A673 (cell line): ENCODE measurements at regions of chr7 and their contacts with region 1.

Region 1: DNA sequence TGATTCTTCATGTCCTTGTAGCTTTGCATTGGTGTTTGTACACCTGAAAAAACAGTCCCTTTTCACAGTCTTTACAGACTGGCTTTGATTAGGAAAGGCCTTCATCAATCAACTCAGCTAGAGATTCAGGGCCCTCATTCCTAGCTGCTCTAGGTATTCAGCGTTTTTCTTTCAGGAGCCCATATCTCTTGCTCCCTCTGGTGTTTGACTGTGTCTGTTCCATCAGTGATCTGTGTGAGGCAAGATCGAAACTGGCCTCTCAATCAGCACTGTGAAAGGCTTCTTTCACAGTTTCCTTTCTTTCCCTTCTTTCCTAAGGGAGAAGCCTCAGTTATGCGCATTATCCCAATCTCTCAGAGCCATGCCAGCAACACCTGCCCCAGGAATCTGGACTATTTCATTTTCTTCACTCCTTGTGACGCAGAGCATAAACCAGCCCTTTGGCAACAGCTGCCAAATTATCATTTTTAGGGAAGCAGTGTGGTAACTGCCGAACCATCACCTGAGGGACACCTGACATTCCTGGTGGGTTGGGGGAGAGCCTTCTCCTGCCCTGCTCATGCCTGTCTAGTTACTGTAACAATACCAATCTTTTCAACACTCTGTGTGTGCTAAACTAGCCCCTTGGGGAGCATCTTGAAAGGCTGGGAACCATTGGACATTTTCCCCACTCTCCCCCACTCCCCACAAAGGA is 75.7 kb upstream of the CCDC71L start:
- DNase-seq: peak; percentile 75
- H3K4me3 ChIP-seq: no peak overlapping the region
- H3K27ac ChIP-seq: no peak overlapping the region
- H3K4me1 ChIP-seq: peaks cover 3% of the 10 kb centered on the region
- H3K27me3 ChIP-seq: no peaks in the 10 kb centered on the region
- CTCF ChIP-seq: peak; percentile 71

Region 2: DNA sequence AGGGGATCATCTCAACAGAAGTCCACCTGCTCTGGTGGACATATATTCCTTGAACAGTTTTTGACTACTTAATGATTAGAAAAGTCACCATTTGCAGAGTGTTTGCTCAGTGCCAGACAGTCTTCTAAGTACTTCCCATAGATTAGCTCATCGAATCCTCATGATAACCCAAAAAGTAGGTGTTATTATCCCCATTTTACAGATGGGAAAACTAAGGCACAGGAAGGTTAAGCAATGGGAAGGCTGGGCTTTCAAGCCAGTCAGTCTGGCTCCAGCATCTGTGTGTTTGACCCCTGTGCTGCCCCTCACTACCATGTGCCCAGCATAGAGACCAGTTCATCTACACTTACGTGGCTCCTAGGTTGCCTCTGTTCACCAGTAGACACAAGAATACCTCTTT is 757.7 kb before region 1 on chr7:
- CTCF ChIA-PET with region 1: no interaction called
- POLR2A ChIA-PET with region 1: no interaction called
- intact Hi-C with region 1: no loop called
- DNase-seq: no peak
- H3K4me3 ChIP-seq: no peak overlapping the region
- H3K27ac ChIP-seq: no peak overlapping the region
- H3K4me1 ChIP-seq: no peaks in the 10 kb centered on the region
- H3K27me3 ChIP-seq: no peaks in the 10 kb centered on the region
- CTCF ChIP-seq: no peak

Region 3: DNA sequence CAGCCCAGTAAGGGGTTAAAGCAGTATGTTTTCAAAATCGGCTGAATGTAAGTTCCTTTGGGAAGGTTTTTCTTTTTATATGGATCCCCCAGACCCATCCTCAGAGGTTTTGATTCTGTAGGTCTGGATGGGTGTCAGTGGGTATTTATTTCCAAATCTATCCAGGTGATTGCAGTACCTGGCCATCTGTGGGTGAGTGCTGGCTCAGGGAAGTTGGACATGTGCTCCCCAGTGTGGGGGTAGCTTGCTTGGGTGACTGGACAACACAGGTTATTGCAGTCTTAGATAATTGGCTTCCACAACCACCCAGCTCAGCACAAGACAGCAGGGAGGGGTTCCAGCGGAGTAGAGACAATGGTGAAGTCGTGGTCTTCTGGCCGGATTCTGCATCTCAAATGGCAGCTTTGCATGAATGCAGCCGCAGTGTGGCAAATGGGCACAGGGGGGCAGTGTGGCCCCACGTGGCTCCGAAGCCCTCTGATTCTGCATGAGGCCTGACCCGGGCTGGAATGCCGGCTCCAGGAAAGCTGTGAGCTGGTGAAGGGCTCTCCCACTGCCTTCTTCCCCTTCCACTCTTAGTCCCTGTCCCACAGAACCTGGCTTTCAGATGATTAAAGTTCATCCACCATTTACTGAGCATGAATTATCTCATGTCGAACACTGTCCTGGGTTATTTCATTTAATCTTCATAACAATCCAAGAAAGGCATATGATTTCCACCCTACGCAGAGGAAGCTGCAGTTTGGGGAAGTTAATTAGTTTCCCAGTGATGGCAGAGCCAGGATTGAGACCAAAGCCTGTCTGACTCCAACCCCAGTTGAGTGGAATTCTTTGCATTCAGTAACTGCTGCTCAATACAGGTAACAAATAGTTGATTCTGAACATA is 560.0 kb before region 1 on chr7:
- CTCF ChIA-PET with region 1: interaction called, 14 read pairs
- POLR2A ChIA-PET with region 1: no interaction called
- intact Hi-C with region 1: loop called (anchors 1 kb)
- DNase-seq: peak; percentile 83
- H3K4me3 ChIP-seq: no peak overlapping the region
- H3K27ac ChIP-seq: no peak overlapping the region
- H3K4me1 ChIP-seq: no peaks in the 10 kb centered on the region
- H3K27me3 ChIP-seq: no peaks in the 10 kb centered on the region
- CTCF ChIP-seq: peak; percentile 98

Region 4: GRCh38 chr7:106471686-106472440 is 264.8 kb before region 1 on chr7:
- CTCF ChIA-PET with region 1: no interaction called
- POLR2A ChIA-PET with region 1: no interaction called
- intact Hi-C with region 1: loop called (anchors 5 kb)
- DNase-seq: no peak
- H3K4me3 ChIP-seq: no peak overlapping the region
- H3K27ac ChIP-seq: no peak overlapping the region
- H3K4me1 ChIP-seq: no peaks in the 10 kb centered on the region
- H3K27me3 ChIP-seq: peaks cover 13% of the 10 kb centered on the region
- CTCF ChIP-seq: no peak

Region 5: DNA sequence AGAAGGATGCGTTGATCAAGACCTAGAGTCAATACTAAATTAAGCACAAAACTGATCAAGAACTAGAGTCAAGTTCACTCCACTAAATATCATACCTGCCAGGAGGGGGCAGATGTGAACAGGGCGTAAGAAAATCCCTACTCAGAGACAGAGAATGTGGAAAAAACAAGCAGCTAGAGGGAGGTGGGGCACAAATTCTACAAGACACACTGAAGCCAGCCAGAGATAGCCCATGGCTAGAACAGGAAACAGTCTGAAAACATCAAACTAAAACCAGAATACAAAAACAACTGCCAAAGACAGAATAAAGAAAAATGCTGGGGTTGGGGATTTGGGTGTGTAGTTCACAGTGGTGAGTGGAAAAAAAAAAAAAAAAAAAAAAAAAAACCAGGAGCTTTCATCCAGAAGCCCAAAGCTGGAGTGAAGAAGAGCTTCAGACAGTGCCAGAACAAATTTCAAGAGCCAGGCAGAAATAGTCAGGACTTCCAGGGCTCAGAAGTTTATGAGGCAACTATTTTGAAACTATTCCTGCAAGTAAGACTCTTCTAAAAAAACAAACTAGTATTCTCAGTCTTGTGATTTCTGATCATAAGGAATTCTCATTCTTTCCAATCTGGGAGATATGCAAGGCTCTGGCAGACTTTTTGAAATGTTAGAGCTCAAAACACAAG is 194.0 kb before region 1 on chr7:
- CTCF ChIA-PET with region 1: interaction called, 27 read pairs
- POLR2A ChIA-PET with region 1: no interaction called
- intact Hi-C with region 1: loop called (anchors 1 kb)
- DNase-seq: peak; percentile 79
- H3K4me3 ChIP-seq: no peak overlapping the region
- H3K27ac ChIP-seq: no peak overlapping the region
- H3K4me1 ChIP-seq: no peaks in the 10 kb centered on the region
- H3K27me3 ChIP-seq: no peaks in the 10 kb centered on the region
- CTCF ChIP-seq: peak; percentile 80

Region 6: GRCh38 chr7:106659963-106660861 is 76.4 kb before region 1 on chr7:
- CTCF ChIA-PET with region 1: interaction called, 5 read pairs
- POLR2A ChIA-PET with region 1: no interaction called
- intact Hi-C with region 1: loop called (anchors 1 kb)
- DNase-seq: peak; percentile 82
- H3K4me3 ChIP-seq: peak overlapping the region; percentile 84
- H3K27ac ChIP-seq: peak overlapping the region; percentile 87
- H3K4me1 ChIP-seq: peaks cover 8% of the 10 kb centered on the region
- H3K27me3 ChIP-seq: no peaks in the 10 kb centered on the region
- CTCF ChIP-seq: peak; percentile 84